ENCODE measurements at regions of chr11 and their contacts with region 1.

Region 1: GRCh38 chr11:104918113-104918824 is 20.0 kb upstream of the CASP12 start:
- DNase-seq: peak in 2 of 9 experiments; percentile 43 to 61
- ATAC-seq: peak; percentile 73
- H3K4me3 ChIP-seq: peak overlapping the region; percentile 53 to 64
- H3K4me3 Mint-ChIP-seq: peak overlapping the region; percentile 89
- H3K27ac ChIP-seq: peak overlapping the region; percentile 47 to 80
- H3K27ac Mint-ChIP-seq: peak overlapping the region; percentile 88
- H3K4me1 ChIP-seq: peaks cover 14% of the 10 kb centered on the region
- H3K4me1 Mint-ChIP-seq: peaks cover 54% of the 10 kb centered on the region
- H3K27me3 ChIP-seq: no peaks in the 10 kb centered on the region
- H3K27me3 Mint-ChIP-seq: no peaks in the 10 kb centered on the region
- CTCF ChIP-seq: no peak

Region 2: DNA sequence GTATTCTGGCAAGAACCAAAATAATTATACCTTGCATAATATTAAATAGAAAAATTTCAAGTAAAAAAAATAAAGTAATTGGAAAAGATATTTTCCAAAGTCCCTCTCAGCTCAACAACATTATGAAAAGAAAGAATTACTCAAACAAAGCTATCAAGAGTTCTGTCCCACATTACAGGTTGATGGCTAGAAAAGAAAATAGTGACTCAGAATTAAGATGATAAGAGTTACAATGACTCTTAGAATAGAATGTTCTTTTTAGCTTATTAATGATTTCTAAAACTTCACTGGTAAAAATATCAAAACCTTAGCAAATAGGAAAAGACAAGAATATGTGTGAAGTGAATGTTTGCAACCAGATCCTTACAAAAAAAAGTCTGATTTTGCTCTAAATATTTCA is 441.8 kb before region 1 on chr11:
- CTCF ChIA-PET with region 1: no interaction called
- POLR2A ChIA-PET with region 1: no interaction called
- intact Hi-C with region 1: no loop called
- DNase-seq: no peak
- ATAC-seq: no peak
- H3K4me3 ChIP-seq: no peak overlapping the region
- H3K4me3 Mint-ChIP-seq: no peak overlapping the region
- H3K27ac ChIP-seq: no peak overlapping the region
- H3K27ac Mint-ChIP-seq: no peak overlapping the region
- H3K4me1 ChIP-seq: no peaks in the 10 kb centered on the region
- H3K4me1 Mint-ChIP-seq: no peaks in the 10 kb centered on the region
- H3K27me3 ChIP-seq: no peaks in the 10 kb centered on the region
- H3K27me3 Mint-ChIP-seq: peaks cover 2% of the 10 kb centered on the region
- CTCF ChIP-seq: no peak

Region 3: DNA sequence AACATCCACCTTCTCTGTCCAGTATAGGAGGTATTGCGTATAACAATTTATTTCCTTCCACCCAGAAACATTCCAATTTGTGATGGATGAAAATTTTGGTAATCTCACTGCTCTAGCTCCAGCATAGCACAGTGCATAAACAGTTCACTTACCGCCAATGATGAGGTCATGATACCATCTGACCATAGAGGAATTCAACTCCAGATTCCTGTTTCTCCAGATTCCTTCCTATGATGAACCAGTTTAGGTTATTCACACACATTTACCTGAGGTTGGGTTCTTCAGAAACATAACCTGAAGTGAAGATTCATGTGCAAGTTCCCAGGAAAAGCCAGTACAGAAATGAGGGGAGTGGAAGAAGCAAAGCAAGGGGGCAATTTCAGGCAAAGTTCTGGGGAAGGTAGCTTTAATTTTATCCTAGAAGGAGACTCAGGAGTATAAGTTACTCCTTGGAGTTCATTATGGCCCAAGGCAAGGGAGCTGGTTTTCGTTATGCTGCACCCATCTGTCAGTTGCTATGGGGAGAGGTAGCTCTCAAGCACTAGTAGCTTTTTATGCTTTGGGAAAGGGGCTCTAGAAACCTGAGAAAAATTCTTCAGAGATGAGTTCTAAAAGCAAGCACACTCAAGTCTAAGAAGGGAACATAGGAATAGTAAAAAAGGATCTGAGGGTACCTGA is 141.6 kb before region 1 on chr11:
- CTCF ChIA-PET with region 1: no interaction called
- POLR2A ChIA-PET with region 1: no interaction called
- intact Hi-C with region 1: no loop called
- DNase-seq: no peak
- ATAC-seq: no peak
- H3K4me3 ChIP-seq: no peak overlapping the region
- H3K4me3 Mint-ChIP-seq: no peak overlapping the region
- H3K27ac ChIP-seq: no peak overlapping the region
- H3K27ac Mint-ChIP-seq: no peak overlapping the region
- H3K4me1 ChIP-seq: peaks cover 9% of the 10 kb centered on the region
- H3K4me1 Mint-ChIP-seq: peaks cover 15% of the 10 kb centered on the region
- H3K27me3 ChIP-seq: no peaks in the 10 kb centered on the region
- H3K27me3 Mint-ChIP-seq: no peaks in the 10 kb centered on the region
- CTCF ChIP-seq: no peak

Region 4: GRCh38 chr11:104799251-104799650 is 119.0 kb before region 1 on chr11:
- CTCF ChIA-PET with region 1: no interaction called
- POLR2A ChIA-PET with region 1: no interaction called
- intact Hi-C with region 1: loop called in 1 of 2 experiments (anchors 10 kb)
- DNase-seq: peak in 1 of 9 experiments; percentile 25
- ATAC-seq: peak; percentile 40
- H3K4me3 ChIP-seq: peak overlapping the region; percentile 0 to 45
- H3K4me3 Mint-ChIP-seq: peak overlapping the region; percentile 86
- H3K27ac ChIP-seq: peak overlapping the region in 1 of 2 experiments; percentile 59
- H3K27ac Mint-ChIP-seq: peak overlapping the region; percentile 90
- H3K4me1 ChIP-seq: peaks cover 13% of the 10 kb centered on the region
- H3K4me1 Mint-ChIP-seq: peaks cover 38% of the 10 kb centered on the region
- H3K27me3 ChIP-seq: no peaks in the 10 kb centered on the region
- H3K27me3 Mint-ChIP-seq: no peaks in the 10 kb centered on the region
- CTCF ChIP-seq: no peak

Region 5: DNA sequence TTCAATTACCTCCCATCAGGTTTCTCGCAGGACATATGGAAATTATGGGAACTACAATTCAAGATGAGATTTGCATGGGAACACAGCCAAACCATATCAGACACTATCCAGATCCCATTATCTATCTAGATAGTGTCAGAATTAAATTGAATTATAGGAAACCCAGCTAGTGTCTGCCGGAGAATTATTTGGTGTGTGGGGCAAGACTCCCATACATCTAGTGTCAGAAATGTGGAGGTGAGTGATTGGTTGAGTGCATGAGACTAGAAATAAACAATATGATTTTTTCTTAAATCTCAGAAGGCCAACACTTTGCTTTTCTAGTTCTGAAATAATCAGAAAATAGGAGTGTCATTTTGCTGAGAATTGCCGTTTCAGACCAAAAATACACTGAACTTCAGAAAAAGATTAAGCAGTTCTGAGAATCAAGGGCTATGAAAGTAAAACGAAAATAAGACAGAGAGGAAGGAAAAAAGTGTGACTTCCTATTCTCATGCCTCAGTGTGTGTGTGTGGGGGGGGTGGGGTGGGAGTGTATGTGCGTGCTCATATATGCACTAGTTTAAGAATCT is 41.3 kb before region 1 on chr11:
- CTCF ChIA-PET with region 1: no interaction called
- POLR2A ChIA-PET with region 1: no interaction called
- intact Hi-C with region 1: loop called in 1 of 2 experiments (anchors 5 kb)
- DNase-seq: peak in 2 of 9 experiments; percentile 52 to 69
- ATAC-seq: peak; percentile 72
- H3K4me3 ChIP-seq: peak overlapping the region; percentile 25 to 32
- H3K4me3 Mint-ChIP-seq: peak overlapping the region; percentile 73
- H3K27ac ChIP-seq: peak overlapping the region; percentile 16 to 80
- H3K27ac Mint-ChIP-seq: peak overlapping the region; percentile 79
- H3K4me1 ChIP-seq: peaks cover 24% of the 10 kb centered on the region
- H3K4me1 Mint-ChIP-seq: peaks cover 43% of the 10 kb centered on the region
- H3K27me3 ChIP-seq: no peaks in the 10 kb centered on the region
- H3K27me3 Mint-ChIP-seq: no peaks in the 10 kb centered on the region
- CTCF ChIP-seq: no peak

Measured in CD8-positive, alpha-beta T cell (primary cell).